CD14-positive monocyte (primary cell): ENCODE measurements at regions of chr18 and their contacts with region 1.

Region 1: GRCh38 chr18:24362758-24363157 is 34.9 kb downstream of the OSBPL1A start:
- DNase-seq: no peak
- H3K4me3 ChIP-seq: no peak overlapping the region
- H3K4me3 Mint-ChIP-seq: no peak overlapping the region
- H3K27ac ChIP-seq: no peak overlapping the region
- H3K27ac Mint-ChIP-seq: peak overlapping the region in 1 of 7 donors; percentile 10
- H3K4me1 ChIP-seq: no peaks in the 10 kb centered on the region
- H3K4me1 Mint-ChIP-seq: peaks cover 8% of the 10 kb centered on the region
- H3K27me3 ChIP-seq: no peaks in the 10 kb centered on the region
- H3K27me3 Mint-ChIP-seq: no peaks in the 10 kb centered on the region
- CTCF ChIP-seq: no peak

Region 2: DNA sequence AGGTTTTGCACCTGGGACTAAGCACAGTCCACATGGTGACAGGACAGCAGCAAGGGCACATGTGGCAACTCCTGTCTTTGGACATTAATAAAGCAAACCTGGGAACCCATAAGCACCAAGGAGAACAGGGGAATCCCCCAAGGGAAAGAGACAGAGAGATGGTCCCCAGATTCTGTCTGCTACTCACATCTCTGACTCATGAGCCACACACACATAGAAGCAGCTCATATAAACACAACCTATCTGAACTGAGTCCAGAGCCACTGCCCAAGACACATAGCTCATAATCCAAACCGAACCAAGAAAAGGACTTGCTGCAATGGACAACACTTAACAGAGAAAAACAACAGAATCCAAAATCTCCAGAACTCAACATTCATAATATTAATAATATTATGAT is 47.6 kb before region 1 on chr18:
- intact Hi-C with region 1: no loop called
- DNase-seq: no peak
- H3K4me3 ChIP-seq: no peak overlapping the region
- H3K4me3 Mint-ChIP-seq: no peak overlapping the region
- H3K27ac ChIP-seq: no peak overlapping the region
- H3K27ac Mint-ChIP-seq: no peak overlapping the region
- H3K4me1 ChIP-seq: no peaks in the 10 kb centered on the region
- H3K4me1 Mint-ChIP-seq: peaks cover 3% of the 10 kb centered on the region
- H3K27me3 ChIP-seq: no peaks in the 10 kb centered on the region
- H3K27me3 Mint-ChIP-seq: no peaks in the 10 kb centered on the region
- CTCF ChIP-seq: no peak

Region 3: GRCh38 chr18:24397694-24398365 is 35.1 kb after region 1 on chr18 and contains the start of gene OSBPL1A:
- intact Hi-C with region 1: loop called in 1 of 2 experiments (anchors 2 kb)
- DNase-seq: peak; percentile 92 to 95 (median 93)
- H3K4me3 ChIP-seq: peak within 1 kb of the TSS; percentile 68 to 78 (median 68)
- H3K4me3 Mint-ChIP-seq: peak within 1 kb of the TSS; percentile 83 to 88
- H3K27ac ChIP-seq: peak within 1 kb of the TSS; percentile 95
- H3K27ac Mint-ChIP-seq: peak within 1 kb of the TSS; percentile 78 to 94 (median 91)
- H3K4me1 ChIP-seq: peaks cover 36 to 46% of the 10 kb centered on the region in 2 donors
- H3K4me1 Mint-ChIP-seq: peaks cover 45% of the 10 kb centered on the region
- H3K27me3 ChIP-seq: no peaks in the 10 kb centered on the region
- H3K27me3 Mint-ChIP-seq: no peaks in the 10 kb centered on the region
- CTCF ChIP-seq: no peak
- polyA plus RNA-seq, gene OSBPL1A: 6.3 to 9.1 (median 7.1) TPM

Region 4: DNA sequence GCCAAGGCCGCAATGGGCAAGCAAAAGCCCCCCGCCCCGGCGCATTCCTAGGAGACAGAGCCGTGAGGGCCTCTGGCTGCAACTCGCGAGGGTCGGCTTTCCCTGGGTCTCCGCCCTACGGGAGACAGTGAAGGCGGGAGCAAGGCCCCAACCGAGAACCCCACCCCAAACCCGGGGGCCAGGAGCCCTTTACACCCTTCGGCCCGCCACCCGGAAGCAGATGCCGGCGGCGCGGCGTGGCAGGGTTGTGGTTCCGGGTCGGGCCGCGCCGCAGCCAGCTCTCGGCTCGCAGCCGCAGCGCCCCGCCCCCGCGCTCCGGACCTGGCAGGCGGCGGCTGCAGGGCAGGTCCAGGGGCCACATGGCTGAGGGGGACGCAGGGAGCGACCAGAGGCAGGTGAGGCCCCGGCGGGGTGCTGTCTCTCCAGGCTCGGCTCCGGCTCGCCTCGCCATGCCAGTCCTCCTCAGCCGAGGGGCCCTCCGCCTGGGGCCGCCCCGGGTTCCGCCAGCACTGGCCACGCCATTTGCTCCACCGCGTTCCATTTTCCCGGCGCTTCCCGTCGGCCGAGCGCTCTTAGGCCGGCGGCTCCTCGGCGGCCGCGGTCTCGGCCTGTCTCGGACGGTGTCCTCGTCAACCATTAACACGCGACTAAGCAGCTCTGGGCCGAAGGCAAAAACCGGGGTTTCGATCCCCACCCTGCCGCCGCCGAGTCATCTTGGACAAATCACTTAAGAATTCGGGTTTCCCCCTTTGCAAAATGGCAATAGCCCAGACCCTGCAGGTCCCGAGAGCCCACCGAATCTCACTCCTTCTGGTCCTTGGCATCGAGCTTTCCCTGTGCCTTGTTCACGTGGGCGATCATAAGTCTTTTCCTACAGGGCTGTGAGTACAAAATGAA is 63.9 kb after region 1 on chr18 and contains the start of gene IMPACT:
- intact Hi-C with region 1: no loop called
- DNase-seq: peak; percentile 70 to 81 (median 80)
- H3K4me3 ChIP-seq: peak within 1 kb of the TSS; percentile 83 to 97 (median 88)
- H3K4me3 Mint-ChIP-seq: peak within 1 kb of the TSS; percentile 95
- H3K27ac ChIP-seq: peak within 1 kb of the TSS; percentile 72 to 90
- H3K27ac Mint-ChIP-seq: peak within 1 kb of the TSS; percentile 82 to 93 (median 91)
- H3K4me1 ChIP-seq: peaks cover 11 to 20% of the 10 kb centered on the region in 2 donors
- H3K4me1 Mint-ChIP-seq: peaks cover 16% of the 10 kb centered on the region
- H3K27me3 ChIP-seq: peaks cover 2 to 11% of the 10 kb centered on the region in 2 donors
- H3K27me3 Mint-ChIP-seq: peaks cover 6 to 12% (median 9%) of the 10 kb centered on the region in 3 donors
- CTCF ChIP-seq: no peak
- polyA plus RNA-seq, gene IMPACT: 8.9 to 19.7 (median 15.8) TPM

Region 5: GRCh38 chr18:24488824-24489493 is 126.2 kb after region 1 on chr18:
- intact Hi-C with region 1: loop called (anchors 2 to 5 kb)
- DNase-seq: peak in 2 of 3 donors; percentile 25 to 46
- H3K4me3 ChIP-seq: no peak overlapping the region
- H3K4me3 Mint-ChIP-seq: no peak overlapping the region
- H3K27ac ChIP-seq: no peak overlapping the region
- H3K27ac Mint-ChIP-seq: no peak overlapping the region
- H3K4me1 ChIP-seq: no peaks in the 10 kb centered on the region
- H3K4me1 Mint-ChIP-seq: peaks cover 21% of the 10 kb centered on the region
- H3K27me3 ChIP-seq: no peaks in the 10 kb centered on the region
- H3K27me3 Mint-ChIP-seq: peaks cover 0 to 6% (median 0%) of the 10 kb centered on the region in 3 donors
- CTCF ChIP-seq: peak; percentile 89

Region 6: DNA sequence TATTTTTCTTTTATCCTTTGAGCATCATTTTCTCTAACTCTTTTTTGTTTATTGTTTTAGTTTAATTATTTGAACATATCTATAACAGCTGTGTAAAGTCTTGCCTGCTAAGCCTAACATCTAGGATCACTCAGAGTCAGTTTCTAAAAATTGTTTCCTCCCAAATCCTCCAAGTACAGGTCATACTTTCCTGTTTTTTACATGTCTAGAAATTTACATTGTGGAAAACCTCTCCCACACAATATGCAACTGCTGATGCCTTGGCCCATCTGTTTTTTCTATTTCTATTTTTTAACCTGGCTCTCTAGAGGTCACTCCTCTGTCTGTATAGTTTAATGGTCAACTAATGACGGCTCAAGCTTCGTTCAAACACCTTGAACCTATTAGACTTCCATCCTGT is 358.6 kb after region 1 on chr18:
- intact Hi-C with region 1: loop called (anchors 5 kb)
- DNase-seq: no peak
- H3K4me3 ChIP-seq: no peak overlapping the region
- H3K4me3 Mint-ChIP-seq: no peak overlapping the region
- H3K27ac ChIP-seq: no peak overlapping the region
- H3K27ac Mint-ChIP-seq: no peak overlapping the region
- H3K4me1 ChIP-seq: no peaks in the 10 kb centered on the region
- H3K4me1 Mint-ChIP-seq: no peaks in the 10 kb centered on the region
- H3K27me3 ChIP-seq: no peaks in the 10 kb centered on the region
- H3K27me3 Mint-ChIP-seq: peaks cover 1 to 8% (median 3%) of the 10 kb centered on the region in 3 donors
- CTCF ChIP-seq: no peak

Region 7: DNA sequence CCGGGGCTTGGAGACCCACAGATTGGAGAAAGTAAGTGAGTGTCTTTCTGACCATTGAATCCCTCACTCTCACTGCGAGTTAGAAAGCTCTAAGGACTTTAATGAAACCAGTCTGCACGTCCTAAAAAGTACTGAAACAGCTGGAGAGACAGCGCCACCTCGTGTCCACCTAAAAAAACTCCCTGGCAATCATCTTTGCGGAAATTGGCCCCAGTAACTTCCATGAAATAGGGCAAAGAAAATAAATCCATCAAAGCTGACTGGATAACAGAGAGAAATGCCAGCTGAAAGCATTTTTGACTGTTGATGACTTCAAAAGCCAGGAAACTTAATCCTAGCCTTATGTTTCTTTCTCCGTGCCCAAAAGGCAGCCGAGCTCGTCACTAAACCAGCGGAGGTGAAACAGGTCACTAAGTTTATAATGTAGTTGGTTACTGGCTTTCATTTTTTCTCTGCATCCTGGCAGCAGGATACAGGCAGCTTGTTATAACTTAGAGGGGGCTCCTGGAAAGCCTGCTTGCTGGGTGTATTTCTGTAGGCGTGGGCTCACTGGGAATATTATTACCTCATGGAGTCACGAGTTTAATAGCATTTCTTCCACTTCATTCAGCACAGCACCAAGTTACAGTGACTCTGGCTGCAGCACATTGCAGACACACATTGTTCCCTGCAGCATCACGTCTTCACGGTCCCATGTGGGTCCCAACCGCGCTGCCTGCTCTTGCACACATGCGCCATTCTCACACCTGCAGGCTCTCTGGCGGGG is 364.2 kb after region 1 on chr18:
- intact Hi-C with region 1: loop called (anchors 5 kb)
- DNase-seq: peak; percentile 15 to 36 (median 30)
- H3K4me3 ChIP-seq: no peak overlapping the region
- H3K4me3 Mint-ChIP-seq: no peak overlapping the region
- H3K27ac ChIP-seq: no peak overlapping the region
- H3K27ac Mint-ChIP-seq: no peak overlapping the region
- H3K4me1 ChIP-seq: no peaks in the 10 kb centered on the region
- H3K4me1 Mint-ChIP-seq: peaks cover 5% of the 10 kb centered on the region
- H3K27me3 ChIP-seq: no peaks in the 10 kb centered on the region
- H3K27me3 Mint-ChIP-seq: peaks cover 0 to 2% (median 2%) of the 10 kb centered on the region in 3 donors
- CTCF ChIP-seq: peak; percentile 88